ENCODE measurements at regions of chr2 and their contacts with region 1.

Region 1: DNA sequence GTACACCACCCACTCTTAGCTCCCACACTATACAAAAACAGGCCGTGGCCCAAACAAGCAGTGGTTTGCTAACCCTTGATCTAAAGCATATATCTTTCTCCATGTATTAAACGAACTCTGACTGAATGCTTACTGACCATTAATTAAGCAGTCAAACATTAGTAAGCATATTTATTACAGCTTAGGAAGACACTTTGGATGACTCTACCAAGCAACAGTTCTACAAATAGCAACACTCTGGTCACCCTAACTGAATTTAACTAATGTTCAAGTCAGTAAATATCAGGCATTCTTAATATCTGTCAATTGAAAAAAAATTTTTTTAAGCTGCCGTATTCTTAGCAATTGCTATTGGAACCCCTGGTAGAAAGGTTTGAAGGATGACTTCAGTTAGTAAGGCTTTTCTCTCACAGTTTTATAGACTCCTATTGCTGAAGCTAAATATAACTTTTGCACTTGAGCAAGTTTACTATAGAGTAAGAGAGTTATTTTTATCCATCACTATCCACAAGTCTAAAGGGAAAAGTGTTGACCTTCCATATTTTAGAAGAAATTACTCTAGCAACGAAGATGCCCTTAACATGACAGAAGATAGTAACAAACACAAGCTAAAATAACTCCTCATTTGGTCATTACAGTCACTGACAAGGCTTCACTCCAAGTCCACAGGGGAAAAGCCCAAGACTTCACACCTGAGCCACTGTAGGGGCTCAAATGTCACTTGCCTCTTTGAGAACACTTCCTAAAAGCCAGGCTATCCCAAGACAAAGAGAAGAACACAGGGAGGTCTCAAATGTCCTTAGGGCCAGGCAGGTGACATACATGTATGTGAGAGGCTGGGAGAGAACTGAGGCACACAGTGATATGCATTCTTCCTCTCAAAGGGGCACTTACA is 74.4 kb downstream of the RTN4 start:
- DNase-seq: no peak
- ATAC-seq: no peak
- H3K4me3 Mint-ChIP-seq: no peak overlapping the region
- H3K27ac Mint-ChIP-seq: no peak overlapping the region
- H3K4me1 Mint-ChIP-seq: peaks cover 28% of the 10 kb centered on the region
- H3K27me3 Mint-ChIP-seq: no peaks in the 10 kb centered on the region

Region 2: DNA sequence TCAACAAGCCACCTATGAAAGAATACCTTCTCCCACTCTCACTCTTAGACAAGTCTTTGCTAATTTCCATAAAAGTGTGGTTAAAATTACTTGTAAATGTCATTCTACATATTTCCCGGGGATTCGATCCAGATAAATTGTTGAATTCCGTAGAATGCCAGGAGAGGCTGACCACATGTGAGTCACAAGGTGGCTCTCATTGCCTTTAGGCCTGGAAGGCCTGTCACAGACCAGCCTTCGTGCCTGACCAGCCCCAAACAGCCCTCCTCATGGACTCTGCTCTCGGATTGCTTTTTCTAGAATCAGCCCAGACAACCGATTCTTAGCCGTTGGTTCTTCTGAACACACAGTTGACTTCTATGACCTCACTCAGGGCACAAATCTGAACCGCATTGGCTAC is 11.6 kb before region 1 on chr2:
- CTCF ChIA-PET with region 1: interaction called, 4 read pairs
- POLR2A ChIA-PET with region 1: no interaction called
- intact Hi-C with region 1: loop called in 1 of 2 experiments (anchors 1 kb)
- DNase-seq: no peak
- ATAC-seq: no peak
- H3K4me3 Mint-ChIP-seq: no peak overlapping the region
- H3K27ac Mint-ChIP-seq: no peak overlapping the region
- H3K4me1 Mint-ChIP-seq: peaks cover 27% of the 10 kb centered on the region
- H3K27me3 Mint-ChIP-seq: no peaks in the 10 kb centered on the region

Region 3: GRCh38 chr2:55123851-55124269 is 148.0 kb after region 1 on chr2:
- CTCF ChIA-PET with region 1: no interaction called
- POLR2A ChIA-PET with region 1: no interaction called
- intact Hi-C with region 1: no loop called
- DNase-seq: no peak
- ATAC-seq: no peak
- H3K4me3 Mint-ChIP-seq: no peak overlapping the region
- H3K27ac Mint-ChIP-seq: no peak overlapping the region
- H3K4me1 Mint-ChIP-seq: no peaks in the 10 kb centered on the region
- H3K27me3 Mint-ChIP-seq: no peaks in the 10 kb centered on the region

Measured in activated CD4-positive, alpha-beta T cell treated with anti-CD3 and anti-CD28 coated beads for 36 hours (primary cell).